ENCODE measurements at regions of chr12 and their contacts with region 1.

Region 1: DNA sequence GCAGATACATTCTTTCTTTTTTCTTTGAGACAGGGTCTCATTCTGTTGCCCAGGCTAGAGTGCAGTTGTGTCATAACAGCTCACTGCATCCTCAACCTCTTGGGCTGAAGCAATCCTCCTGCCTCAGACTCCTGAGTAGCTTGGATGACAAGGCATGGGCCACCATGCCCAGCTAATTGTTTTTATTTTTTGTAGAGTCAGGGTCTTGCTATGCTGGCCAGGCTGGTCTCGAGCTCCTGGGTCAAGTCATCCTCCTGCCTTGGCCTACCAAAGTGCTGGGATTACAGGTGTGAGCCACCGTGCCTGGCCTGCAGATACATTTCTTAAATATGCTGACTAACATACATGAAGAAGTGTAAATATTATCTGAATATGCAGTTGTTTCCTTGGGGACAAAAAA is 115.8 kb downstream of the HECTD4 start:
- DNase-seq: no peak
- CTCF ChIP-seq: no peak

Region 2: DNA sequence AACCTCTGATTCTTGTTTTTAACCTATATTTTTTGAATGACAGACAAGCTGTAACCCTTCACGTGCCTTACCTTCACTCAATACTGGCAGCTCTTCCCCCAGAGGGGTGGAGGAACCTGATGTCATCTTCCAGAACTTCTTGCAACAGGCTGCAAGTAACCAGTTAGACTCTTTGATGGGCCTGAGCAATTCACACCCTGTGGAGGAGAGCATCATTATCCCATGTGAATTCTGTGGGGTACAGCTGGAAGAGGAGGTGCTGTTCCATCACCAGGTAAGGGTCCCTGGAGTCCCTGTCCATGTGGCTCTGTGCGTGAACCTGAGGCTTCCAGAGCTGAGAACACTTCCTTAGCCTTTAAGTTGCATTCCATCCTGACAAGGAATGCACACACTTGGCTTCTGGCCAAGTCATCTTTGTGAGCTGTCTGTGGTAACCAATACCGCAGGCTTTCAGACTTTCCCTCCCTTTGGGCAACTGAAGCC is 118.4 kb before region 1 on chr12:
- CTCF ChIA-PET with region 1: no interaction called
- POLR2A ChIA-PET with region 1: no interaction called
- DNase-seq: no peak
- CTCF ChIP-seq: no peak

Region 3: GRCh38 chr12:112283546-112283945 is 17.1 kb after region 1 on chr12:
- CTCF ChIA-PET with region 1: interaction called, 11 read pairs
- POLR2A ChIA-PET with region 1: no interaction called
- DNase-seq: no peak
- CTCF ChIP-seq: no peak